ENCODE measurements at regions of chr3 and their contacts with region 1.

Region 1: GRCh38 chr3:107458871-107459270 is 63.9 kb upstream of the BBX start:
- DNase-seq: no peak
- ATAC-seq: no peak

Region 2: DNA sequence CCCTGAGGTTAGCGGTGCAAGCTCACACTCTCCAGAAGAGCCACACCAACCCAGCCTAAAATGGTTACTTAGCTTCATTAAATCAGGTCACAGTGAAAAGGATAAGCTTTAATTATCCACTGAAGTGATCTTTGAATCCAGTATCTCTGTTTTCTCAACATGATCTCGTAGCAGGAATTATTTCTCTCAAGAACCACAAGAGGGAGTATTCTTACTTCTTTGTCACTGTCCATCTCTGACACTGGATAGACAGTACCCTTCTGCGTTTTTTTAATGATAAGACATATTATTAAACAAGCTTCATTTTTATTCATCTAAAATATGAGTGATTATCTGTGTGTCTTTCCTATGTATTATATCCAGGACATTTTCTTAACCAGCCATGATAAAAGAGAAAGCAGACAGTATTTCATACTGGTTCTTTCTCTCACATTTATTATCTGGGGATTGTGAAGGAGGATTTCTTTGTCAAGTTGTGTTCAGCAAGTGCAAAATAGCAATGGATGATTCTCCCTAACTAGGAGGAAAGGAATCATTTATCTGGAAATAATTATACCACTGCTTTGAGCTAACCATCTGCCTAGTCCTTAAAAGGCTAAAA is 187.0 kb before region 1 on chr3:
- intact Hi-C with region 1: no loop called
- DNase-seq: no peak
- ATAC-seq: peak; percentile 41 to 63

Region 3: GRCh38 chr3:107392549-107393165 is 66.2 kb before region 1 on chr3:
- intact Hi-C with region 1: loop called in 1 of 2 experiments (anchors 10 kb)
- DNase-seq: no peak
- ATAC-seq: peak in 1 of 2 donors; percentile 49

Measured in left cardiac atrium (tissue), 4 donors.